Heart left ventricle (tissue), 16 donors: ENCODE measurements at regions of chr1 and their contacts with region 1.

Region 1: DNA sequence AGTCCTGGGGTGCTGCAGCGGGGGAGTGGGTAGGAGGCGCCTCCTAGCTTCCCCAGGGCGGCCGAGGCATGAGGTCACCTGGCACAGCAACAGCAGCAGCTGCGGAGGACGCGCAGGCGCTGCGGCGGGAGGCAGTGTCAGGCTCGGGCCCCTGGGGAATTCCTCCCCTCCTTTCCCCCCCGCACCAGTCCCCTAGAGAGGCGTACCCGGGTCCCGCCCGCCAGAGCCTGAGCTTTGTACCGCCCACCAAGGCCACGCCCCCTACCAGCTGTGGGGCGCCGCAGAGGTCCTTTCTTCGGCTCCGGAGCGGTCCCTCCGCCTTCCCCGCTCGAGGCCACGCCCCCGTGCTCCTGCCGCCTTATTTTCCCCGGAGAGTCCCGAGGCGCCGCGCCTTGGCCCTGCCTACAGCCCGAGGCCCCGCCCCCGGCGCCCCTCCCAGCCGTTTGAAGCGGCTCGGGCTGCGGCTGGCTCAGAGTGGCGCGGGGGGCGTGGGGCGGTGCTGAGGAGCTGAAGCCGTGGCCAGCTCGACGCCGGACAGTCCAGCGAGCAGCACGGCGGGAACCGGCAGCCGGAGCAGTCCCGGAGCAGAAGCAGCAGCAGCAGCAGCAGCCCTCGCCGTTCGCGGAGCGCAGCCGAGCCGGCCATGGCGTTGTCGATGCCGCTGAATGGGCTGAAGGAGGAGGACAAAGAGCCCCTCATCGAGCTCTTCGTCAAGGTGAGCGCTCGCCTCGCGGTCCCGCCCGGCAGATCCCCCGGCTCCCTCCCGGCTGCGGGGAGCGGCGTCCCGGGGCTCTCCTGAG is at the start of gene CLIC4:
- DNase-seq: peak; percentile 100
- ATAC-seq: peak; percentile 96 to 97 (median 96)
- H3K4me3 ChIP-seq: peak within 1 kb of the TSS; percentile 76 to 98 (median 89)
- H3K27ac ChIP-seq: peak within 1 kb of the TSS; percentile 89 to 99 (median 96)
- H3K4me1 ChIP-seq: peaks cover 0 to 57% (median 38%) of the 10 kb centered on the region in 12 donors
- H3K27me3 ChIP-seq: no peaks in the 10 kb centered on the region
- CTCF ChIP-seq: peak in 9 of 12 donors; percentile 11 to 67 (median 41)
- POLR2A ChIP-seq: peak; percentile 92 to 100
- total RNA-seq, gene CLIC4: 280 to 917 (median 387) TPM

Region 2: DNA sequence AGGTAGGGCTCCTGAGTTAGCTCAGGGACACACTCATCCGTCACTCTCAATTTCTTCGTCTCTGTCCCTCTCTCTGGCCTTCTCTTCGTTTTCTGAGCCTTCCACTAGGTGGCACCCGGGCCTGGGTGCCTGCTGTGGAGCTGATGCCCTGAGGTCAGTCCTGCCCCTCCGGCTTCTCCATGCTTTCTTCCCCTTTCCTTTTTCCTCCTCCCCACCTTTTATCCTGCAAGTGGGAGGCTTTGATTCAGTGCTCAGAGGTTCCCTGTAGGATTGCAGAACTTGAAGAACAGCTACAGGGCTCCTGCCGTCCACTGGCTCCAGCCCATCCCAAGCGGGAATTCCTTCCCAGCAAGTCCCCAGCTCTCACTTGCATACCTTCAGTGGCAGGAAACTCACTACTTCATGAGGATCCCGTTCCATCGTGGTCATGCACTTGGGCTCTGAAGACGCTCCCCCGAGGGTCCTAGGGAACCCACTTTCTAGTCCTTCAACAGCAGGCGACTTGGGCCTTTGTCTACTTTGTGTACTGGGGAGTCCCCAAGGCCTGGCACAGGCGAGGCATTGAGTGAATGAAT is 56.4 kb before region 1 on chr1:
- intact Hi-C with region 1: loop called in 6 of 10 experiments (anchors 2 to 5 kb)
- DNase-seq: peak; percentile 76 to 82 (median 81)
- ATAC-seq: peak; percentile 86 to 90 (median 89)
- H3K4me3 ChIP-seq: no peak overlapping the region
- H3K27ac ChIP-seq: peak overlapping the region in 4 of 12 donors; percentile 12 to 51 (median 18)
- H3K4me1 ChIP-seq: peaks cover 1 to 33% (median 15%) of the 10 kb centered on the region in 12 donors
- H3K27me3 ChIP-seq: no peaks in the 10 kb centered on the region
- CTCF ChIP-seq: peak; percentile 80 to 97 (median 90)
- POLR2A ChIP-seq: no peak

Region 3: DNA sequence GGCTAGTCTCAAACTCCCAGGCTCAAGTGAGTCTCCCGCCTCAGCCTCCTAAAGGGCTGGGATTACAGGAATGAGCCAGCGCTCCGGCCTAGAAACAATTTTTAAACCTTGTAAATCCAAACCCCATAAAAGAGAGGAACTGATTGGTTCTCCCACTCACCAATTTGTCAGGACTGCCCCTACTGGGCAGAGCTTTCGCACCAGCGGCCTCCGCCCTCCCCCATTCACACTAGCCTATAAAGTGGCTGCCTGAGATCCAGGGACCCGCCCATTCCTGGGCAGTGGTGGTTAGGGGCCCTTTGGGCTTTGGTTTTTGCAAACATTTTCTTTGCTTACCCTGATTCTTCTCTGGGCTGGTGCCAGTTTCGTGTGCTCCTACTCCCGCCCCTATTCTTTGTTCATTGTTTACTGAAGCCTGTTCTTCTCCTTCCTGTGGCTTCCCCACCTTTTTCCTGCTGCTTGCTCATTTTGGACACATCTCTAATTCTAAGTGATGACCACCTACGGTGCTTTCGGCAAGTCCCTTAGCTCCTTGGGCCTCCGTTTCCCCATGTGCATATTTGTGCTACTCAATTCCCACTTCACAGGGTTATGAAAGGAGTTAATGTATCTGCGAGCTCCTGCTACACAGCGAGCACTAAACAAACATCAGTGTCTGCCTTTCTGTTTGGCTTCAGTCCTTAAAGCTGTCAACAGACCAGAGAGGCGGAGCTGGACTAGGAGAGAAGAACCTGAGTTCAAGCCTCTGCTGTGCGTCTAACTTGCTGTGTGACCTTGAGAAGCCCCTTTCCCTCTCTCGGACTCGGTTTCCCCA is 39.6 kb before region 1 on chr1:
- intact Hi-C with region 1: loop called in 1 of 10 experiments (anchors 1 kb)
- DNase-seq: peak; percentile 87 to 93 (median 89)
- ATAC-seq: peak; percentile 94 to 97 (median 96)
- H3K4me3 ChIP-seq: peak overlapping the region in 8 of 12 donors; percentile 2 to 32 (median 20)
- H3K27ac ChIP-seq: peak overlapping the region; percentile 63 to 86 (median 74)
- H3K4me1 ChIP-seq: peaks cover 0 to 47% (median 20%) of the 10 kb centered on the region in 12 donors
- H3K27me3 ChIP-seq: no peaks in the 10 kb centered on the region
- CTCF ChIP-seq: no peak
- POLR2A ChIP-seq: peak in 1 of 2 donors; percentile 9

Region 4: DNA sequence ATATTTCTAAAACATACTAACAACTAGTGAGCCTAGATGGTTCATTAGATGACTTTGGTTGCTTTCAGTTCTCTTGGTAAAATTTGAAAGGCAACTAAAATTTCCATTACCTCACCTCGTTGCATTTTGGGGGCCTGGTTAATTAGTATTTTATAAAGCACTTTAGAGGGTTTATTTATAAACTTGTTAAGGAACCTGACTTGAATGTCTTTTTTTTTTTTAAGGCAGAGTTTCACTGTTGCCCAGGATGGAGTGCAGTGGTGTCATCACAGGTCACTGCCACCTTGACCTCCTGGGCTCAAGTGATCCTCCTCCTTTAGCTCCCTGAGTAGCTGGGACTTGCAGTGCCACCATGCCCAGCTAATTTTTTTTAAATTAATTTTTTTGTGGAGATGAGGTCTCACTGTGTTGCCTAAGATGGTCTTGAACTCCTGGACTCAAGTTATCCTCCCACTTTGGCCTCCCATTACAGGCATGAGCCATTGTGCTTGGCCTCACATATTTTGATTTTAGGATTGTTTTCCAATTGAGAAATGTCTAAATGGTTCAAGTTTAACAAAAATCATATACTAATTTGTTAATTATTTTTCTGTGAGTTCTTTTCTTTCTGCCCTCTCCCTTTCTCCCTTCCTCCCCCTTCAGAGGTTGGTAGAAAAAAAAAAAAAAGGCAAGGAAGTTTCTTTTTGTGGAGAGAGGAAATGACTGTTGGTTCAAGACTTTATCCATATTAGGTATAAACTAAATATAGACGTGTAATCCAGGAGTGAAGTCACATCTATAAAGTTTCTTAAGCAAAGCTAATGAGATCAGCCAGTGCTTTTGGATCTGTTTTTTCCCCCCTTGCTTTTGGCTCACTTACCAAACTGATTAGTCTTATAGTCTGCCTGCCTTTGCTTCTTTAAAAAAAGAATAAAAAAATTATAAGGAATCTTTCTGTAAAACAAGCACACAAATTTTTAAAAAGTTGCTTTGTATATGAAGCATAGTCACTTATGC is 24.8 kb after region 1 on chr1:
- intact Hi-C with region 1: loop called in 2 of 10 experiments (anchors 2 kb)
- DNase-seq: no peak
- ATAC-seq: peak; percentile 62 to 91 (median 76)
- H3K4me3 ChIP-seq: peak overlapping the region in 4 of 12 donors; percentile 0 to 9 (median 4)
- H3K27ac ChIP-seq: peak overlapping the region; percentile 45 to 93 (median 88)
- H3K4me1 ChIP-seq: peaks cover 9 to 69% (median 52%) of the 10 kb centered on the region in 12 donors
- H3K27me3 ChIP-seq: no peaks in the 10 kb centered on the region
- CTCF ChIP-seq: no peak
- POLR2A ChIP-seq: no peak

Region 5: DNA sequence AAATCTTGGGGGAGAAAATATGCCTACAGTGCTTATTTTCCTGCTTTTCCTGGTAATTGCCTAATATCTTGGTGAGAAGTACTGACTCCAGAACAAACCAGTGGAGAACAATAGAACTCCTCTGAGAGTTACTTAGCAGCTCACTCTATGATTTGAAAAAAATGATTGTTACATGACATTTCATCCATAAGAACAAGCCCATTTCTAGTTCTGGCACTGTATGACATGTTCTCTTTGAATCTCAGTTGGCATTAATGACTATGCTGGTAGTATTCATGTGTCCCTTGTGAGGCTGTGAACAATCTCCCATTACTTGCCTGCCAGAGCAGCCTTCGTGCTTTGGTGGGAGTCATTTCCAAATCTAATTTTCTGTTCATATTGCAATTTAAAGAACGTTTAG is 58.1 kb after region 1 on chr1:
- intact Hi-C with region 1: loop called in 1 of 10 experiments (anchors 5 kb)
- DNase-seq: no peak
- ATAC-seq: peak; percentile 36 to 62 (median 51)
- H3K4me3 ChIP-seq: no peak overlapping the region
- H3K27ac ChIP-seq: peak overlapping the region; percentile 0 to 85 (median 36)
- H3K4me1 ChIP-seq: peaks cover 7 to 67% (median 52%) of the 10 kb centered on the region in 12 donors
- H3K27me3 ChIP-seq: no peaks in the 10 kb centered on the region
- CTCF ChIP-seq: no peak
- POLR2A ChIP-seq: no peak

Region 6: GRCh38 chr1:24830680-24831272 is 85.7 kb after region 1 on chr1:
- intact Hi-C with region 1: loop called in 9 of 10 experiments (anchors 2 to 10 kb)
- DNase-seq: no peak
- ATAC-seq: peak; percentile 77 to 83 (median 80)
- H3K4me3 ChIP-seq: no peak overlapping the region
- H3K27ac ChIP-seq: peak overlapping the region in 2 of 12 donors; percentile 17 to 32
- H3K4me1 ChIP-seq: peaks cover 0 to 65% (median 53%) of the 10 kb centered on the region in 12 donors
- H3K27me3 ChIP-seq: no peaks in the 10 kb centered on the region
- CTCF ChIP-seq: peak; percentile 80 to 95 (median 86)
- POLR2A ChIP-seq: no peak